ENCODE measurements at regions of chr5 and their contacts with region 1.

Region 1: GRCh38 chr5:63894690-63895089 is 67.6 kb downstream of the HTR1A start:
- DNase-seq: no peak
- ATAC-seq: no peak
- H3K4me3 ChIP-seq: no peak overlapping the region
- H3K27ac ChIP-seq: no peak overlapping the region
- H3K4me1 ChIP-seq: no peaks in the 10 kb centered on the region
- H3K27me3 ChIP-seq: no peaks in the 10 kb centered on the region
- CTCF ChIP-seq: no peak
- EP300 ChIP-seq: no peak
- POLR2A ChIP-seq: no peak
- RAD21 ChIP-seq: no peak

Region 2: GRCh38 chr5:63843190-63843589 is 51.5 kb before region 1 on chr5:
- CTCF ChIA-PET with region 1: no interaction called
- POLR2A ChIA-PET with region 1: no interaction called
- in situ Hi-C with region 1: no loop called
- intact Hi-C with region 1: no loop called
- DNase-seq: no peak
- ATAC-seq: no peak
- H3K4me3 ChIP-seq: no peak overlapping the region
- H3K27ac ChIP-seq: no peak overlapping the region
- H3K4me1 ChIP-seq: no peaks in the 10 kb centered on the region
- H3K27me3 ChIP-seq: no peaks in the 10 kb centered on the region
- CTCF ChIP-seq: no peak
- EP300 ChIP-seq: no peak
- POLR2A ChIP-seq: no peak
- RAD21 ChIP-seq: no peak

Region 3: DNA sequence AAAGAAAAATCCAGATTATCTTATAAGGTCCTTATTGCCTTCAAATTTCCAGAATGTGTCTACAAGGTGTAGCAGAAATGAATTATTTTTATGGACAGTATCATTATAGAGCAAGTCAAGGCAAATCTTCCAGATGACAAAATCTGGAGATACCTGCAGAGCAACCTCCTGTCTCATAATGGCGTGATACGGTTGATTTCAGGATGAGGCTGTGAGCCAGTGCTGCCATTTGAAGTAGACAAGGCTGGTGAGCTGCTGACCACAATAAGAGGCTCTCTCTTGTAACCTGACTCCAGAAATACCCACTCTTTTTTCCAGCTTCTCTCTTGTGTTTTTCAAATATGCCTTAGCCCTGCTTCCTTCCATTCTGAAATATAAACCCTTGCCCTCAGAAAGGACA is 40.6 kb before region 1 on chr5:
- CTCF ChIA-PET with region 1: no interaction called
- POLR2A ChIA-PET with region 1: no interaction called
- in situ Hi-C with region 1: no loop called
- intact Hi-C with region 1: loop called (anchors 1 kb)
- DNase-seq: no peak
- ATAC-seq: no peak
- H3K4me3 ChIP-seq: no peak overlapping the region
- H3K27ac ChIP-seq: no peak overlapping the region
- H3K4me1 ChIP-seq: no peaks in the 10 kb centered on the region
- H3K27me3 ChIP-seq: no peaks in the 10 kb centered on the region
- CTCF ChIP-seq: no peak
- EP300 ChIP-seq: no peak
- POLR2A ChIP-seq: no peak
- RAD21 ChIP-seq: no peak